ENCODE measurements at regions of chr15 and their contacts with region 1.

Region 1: DNA sequence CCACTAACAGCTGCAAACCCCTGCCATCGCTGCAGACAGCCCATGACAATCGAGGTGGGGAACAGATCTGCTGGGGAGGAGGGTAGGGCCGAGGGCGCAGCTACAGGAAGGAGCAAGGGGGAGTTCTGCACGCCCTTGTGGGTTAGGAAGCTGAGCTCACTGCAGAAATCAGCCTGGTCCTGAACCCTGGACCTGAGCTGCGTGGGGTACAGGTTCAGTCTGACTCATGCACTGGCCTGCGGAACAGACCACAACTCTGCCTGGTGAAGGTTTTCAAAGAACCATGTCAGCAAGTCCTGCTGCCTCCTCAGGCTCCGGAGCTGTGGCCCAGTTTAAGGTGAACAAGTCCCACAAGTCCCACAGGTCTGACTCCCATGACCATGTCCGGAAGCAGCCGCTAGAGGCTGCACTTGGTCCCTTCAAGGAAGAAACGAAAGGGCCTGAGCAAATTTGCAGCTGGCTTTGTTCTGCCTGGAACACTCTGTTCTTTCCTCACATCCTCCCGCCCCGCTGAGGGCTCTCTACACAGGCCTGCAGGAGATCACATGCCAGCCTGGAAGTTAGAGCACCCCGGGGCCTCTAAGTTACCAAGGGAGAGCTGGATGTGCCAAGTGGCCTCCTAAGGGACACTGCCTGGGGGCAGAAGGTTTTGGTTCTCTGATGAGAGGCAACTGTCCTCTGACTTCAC is 49.4 kb upstream of the AKAP13 start:
- DNase-seq: peak; percentile 63
- H3K4me3 ChIP-seq: peak overlapping the region; percentile 41
- CTCF ChIP-seq: peak; percentile 86

Region 2: GRCh38 chr15:85154061-85154460 is 177.0 kb before region 1 on chr15:
- CTCF ChIA-PET with region 1: no interaction called
- POLR2A ChIA-PET with region 1: no interaction called
- DNase-seq: no peak
- H3K4me3 ChIP-seq: no peak overlapping the region
- CTCF ChIP-seq: no peak

Region 3: DNA sequence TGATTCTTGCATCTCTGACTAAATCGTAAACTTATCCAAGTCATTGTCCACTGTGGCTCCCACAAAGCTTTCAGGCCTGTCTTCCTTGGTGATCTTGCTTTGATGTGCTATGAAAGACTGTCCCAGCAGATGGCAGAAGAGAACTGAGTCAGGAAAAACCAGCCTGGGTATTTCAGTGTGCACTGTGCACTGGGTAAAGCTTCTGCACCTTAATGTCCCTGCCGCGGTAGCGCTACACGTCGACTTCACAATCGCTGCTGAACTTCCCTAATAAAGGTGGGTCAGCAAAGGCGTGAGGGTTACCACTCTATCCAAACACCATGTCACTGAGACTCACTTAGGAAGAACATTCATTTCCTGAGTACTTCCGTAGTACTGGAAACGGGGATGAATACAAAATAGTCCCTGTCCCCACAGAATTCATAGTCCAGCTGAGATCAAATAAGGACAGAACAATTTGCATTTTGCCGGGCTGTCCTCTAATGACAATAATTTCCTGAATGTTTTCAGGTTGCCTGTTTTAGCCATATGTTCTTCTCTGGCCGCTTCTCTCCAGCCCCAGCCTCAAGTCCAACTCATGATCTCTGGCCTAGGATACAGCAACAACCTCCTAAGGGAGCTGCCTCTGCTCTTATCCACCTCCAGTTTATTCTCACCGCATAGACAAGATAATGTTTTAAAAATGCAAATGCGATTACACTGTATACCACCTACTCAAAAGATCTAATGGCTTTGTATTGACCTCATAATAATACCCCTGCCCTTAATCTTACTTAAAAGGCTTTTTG is 34.2 kb before region 1 on chr15:
- CTCF ChIA-PET with region 1: interaction called, 11 read pairs
- POLR2A ChIA-PET with region 1: no interaction called
- DNase-seq: no peak
- H3K4me3 ChIP-seq: peak overlapping the region; percentile 46
- CTCF ChIP-seq: peak; percentile 73

Region 4: GRCh38 chr15:85318048-85318731 is 12.9 kb before region 1 on chr15:
- CTCF ChIA-PET with region 1: interaction called, 76 read pairs
- POLR2A ChIA-PET with region 1: interaction called, 13 read pairs
- DNase-seq: peak; percentile 76
- H3K4me3 ChIP-seq: no peak overlapping the region
- CTCF ChIP-seq: no peak

Region 5: GRCh38 chr15:85475317-85475701 is 144.3 kb after region 1 on chr15:
- CTCF ChIA-PET with region 1: interaction called, 11 read pairs
- POLR2A ChIA-PET with region 1: no interaction called
- DNase-seq: no peak
- H3K4me3 ChIP-seq: no peak overlapping the region
- CTCF ChIP-seq: no peak

Region 6: GRCh38 chr15:85494048-85494793 is 163.2 kb after region 1 on chr15:
- CTCF ChIA-PET with region 1: interaction called, 13 read pairs
- POLR2A ChIA-PET with region 1: no interaction called
- DNase-seq: peak; percentile 46
- H3K4me3 ChIP-seq: no peak overlapping the region
- CTCF ChIP-seq: no peak

Measured in AG04449 (cell line).